Endothelial cell of umbilical vein (primary cell): ENCODE measurements at regions of chr16 and their contacts with region 1.

Region 1: DNA sequence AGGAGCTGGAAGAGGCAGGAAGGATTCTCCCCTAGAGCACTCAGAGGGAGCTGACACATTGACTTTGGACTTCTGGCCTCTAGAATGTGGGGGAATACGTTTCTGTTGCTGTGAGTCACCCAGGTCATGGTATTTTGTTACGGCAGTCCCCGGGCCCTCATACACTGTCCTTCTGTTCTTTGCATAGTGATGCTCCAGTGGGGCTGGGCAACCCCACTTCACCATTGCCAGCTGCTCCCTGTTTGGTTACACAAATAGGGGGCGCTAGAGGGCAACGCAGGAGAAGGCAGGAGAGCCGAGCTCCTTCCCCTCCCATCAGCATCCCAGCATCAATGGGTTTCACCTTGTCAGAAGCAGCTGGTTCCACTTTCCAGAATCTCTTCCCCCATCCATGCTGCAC is 257.7 kb upstream of the FOXF1 start:
- DNase-seq: peak; percentile 45
- H3K4me3 ChIP-seq: no peak overlapping the region
- H3K27ac ChIP-seq: no peak overlapping the region
- H3K4me1 ChIP-seq: no peaks in the 10 kb centered on the region
- H3K27me3 ChIP-seq: peaks cover 5 to 17% of the 10 kb centered on the region in 2 experiments
- CTCF ChIP-seq: peak; percentile 58 to 77
- POLR2A ChIP-seq: no peak

Region 2: DNA sequence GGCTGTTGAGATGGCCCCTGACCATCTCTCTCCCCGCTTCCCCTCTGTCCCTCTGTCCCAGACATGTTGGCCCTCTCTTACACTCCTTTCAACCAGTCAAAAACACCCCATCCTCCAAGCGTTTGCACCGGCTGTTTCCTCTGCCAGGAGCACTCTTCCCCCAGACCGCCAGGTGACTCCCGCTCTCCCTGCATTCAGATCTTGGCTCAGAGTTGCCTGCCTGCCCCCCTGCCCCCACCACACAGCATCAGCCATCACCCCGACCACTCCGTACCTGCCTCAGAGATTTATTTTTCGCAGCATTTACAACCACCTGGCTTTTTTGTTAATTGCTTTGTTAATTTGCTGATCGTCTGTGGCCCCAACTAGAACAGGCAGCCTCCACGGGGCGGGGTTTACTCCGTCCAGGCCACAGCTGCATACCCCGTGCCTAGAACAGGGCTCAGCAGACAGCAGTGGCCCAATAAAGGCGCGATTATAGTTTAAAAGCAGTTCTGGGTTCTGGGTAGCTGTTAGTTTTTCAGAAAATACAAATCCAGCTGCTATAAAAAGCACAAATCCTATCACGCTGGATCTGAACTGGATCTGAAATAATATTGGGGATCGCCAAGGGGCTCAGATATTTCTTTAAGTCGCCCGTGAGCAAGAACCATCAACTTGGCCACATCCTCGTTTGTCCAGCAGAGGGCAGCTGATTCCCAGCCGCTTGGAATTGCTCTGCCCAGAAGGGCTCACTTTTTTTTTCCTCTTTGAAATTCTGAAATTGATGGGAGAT is 180.1 kb before region 1 on chr16:
- CTCF ChIA-PET with region 1: interaction called, 32 read pairs
- POLR2A ChIA-PET with region 1: no interaction called
- dilution Hi-C with region 1: no loop called
- intact Hi-C with region 1: loop called (anchors 1 kb)
- DNase-seq: peak; percentile 75
- H3K4me3 ChIP-seq: no peak overlapping the region
- H3K27ac ChIP-seq: no peak overlapping the region
- H3K4me1 ChIP-seq: peaks cover 9% of the 10 kb centered on the region
- H3K27me3 ChIP-seq: peaks cover 0 to 2% of the 10 kb centered on the region in 2 experiments
- CTCF ChIP-seq: peak; percentile 75 to 85
- POLR2A ChIP-seq: no peak

Region 3: DNA sequence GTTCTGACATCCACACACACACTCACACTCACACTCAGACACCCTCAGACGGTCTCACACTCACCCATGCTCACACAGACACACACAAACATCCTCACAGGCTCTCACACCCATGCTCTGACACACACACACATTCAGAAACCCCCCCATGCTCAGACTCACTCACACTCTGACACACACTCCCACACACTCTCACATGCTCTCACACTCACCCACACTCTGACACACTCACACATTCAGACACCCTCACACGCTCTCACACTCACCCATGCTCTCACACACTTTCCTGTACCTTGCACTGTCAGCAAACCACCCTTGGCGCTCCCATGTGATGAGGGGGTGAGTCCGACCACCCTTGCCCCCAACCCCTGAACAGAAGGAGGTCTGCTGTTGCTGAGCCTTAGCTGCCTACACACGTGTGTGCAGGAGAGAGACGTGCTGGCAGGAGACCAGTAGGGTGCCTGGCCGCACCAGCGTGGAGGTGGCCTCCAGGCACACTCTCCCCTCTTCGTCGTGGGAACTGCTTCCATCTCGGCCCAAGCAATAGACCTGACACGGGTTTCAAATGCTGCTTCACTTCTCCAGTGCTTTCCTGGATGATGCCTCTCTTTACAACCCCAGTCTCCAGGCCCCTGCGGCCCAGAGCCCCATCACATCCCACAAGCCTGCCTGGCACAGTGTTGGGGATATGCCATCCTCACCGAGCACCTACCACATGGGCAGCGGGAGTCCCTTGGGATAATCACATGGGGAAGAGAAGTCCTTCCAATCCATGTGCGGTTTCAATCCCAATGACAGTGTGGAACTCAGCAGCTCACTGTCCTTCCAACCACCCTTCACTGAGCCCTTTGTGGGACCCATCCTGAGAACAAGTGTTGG is 10.1 kb before region 1 on chr16:
- CTCF ChIA-PET with region 1: interaction called, 18 read pairs
- POLR2A ChIA-PET with region 1: no interaction called
- dilution Hi-C with region 1: no loop called
- intact Hi-C with region 1: no loop called
- DNase-seq: no peak
- H3K4me3 ChIP-seq: no peak overlapping the region
- H3K27ac ChIP-seq: no peak overlapping the region
- H3K4me1 ChIP-seq: no peaks in the 10 kb centered on the region
- H3K27me3 ChIP-seq: peaks cover 17 to 21% of the 10 kb centered on the region in 2 experiments
- CTCF ChIP-seq: no peak
- POLR2A ChIP-seq: no peak

Region 4: DNA sequence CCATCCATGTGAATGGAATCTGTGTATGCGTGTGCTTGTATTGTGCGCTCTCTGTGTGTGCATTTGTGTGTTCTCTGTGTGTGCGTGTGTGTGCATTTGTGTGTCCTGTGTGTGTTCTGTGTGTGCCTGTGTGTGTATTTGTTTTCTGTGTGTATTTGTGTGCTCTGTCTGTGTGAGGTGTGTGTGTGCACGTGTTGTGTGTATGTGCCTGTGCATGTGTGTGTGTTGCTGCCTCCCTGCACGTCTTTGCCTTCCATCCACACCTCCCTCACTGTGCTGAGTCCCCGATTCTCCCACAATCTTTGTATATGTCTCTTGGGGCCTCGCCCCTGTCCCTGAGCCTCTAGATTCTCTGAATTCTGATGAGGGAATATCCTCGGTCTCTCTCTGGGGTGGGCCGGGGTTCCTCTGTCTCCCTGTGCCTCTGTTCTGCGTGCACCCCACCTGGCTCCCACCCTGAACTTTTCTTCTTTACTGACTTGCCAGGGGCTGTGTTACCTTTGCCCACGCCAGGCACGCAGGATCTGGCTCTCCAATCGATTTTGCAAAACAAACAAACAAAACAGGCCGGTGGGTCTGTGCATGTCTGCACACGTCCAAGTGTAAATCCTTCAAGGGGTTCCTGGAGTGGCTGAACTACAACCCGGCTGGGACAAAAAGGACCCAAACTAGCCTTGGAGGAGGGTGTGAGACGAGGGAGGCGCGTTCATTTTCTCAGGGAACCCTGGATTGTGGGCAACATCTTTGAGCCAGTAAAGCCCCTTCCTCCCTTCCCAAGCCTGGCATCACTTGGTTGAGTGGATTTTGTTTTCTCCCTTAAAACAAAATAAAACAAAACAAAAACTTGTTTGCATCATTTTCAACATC is 249.6 kb after region 1 on chr16:
- CTCF ChIA-PET with region 1: interaction called, 10 read pairs
- POLR2A ChIA-PET with region 1: no interaction called
- dilution Hi-C with region 1: no loop called
- intact Hi-C with region 1: no loop called
- DNase-seq: no peak
- H3K4me3 ChIP-seq: no peak overlapping the region
- H3K27ac ChIP-seq: no peak overlapping the region
- H3K4me1 ChIP-seq: no peaks in the 10 kb centered on the region
- H3K27me3 ChIP-seq: peaks cover 88 to 94% of the 10 kb centered on the region in 2 experiments
- CTCF ChIP-seq: no peak
- POLR2A ChIP-seq: no peak